Prostate gland (tissue), 2 donors: ENCODE measurements at regions of chr11 and their contacts with region 1.

Region 1: GRCh38 chr11:114250993-114251814 is 45.0 kb upstream of the NNMT start:
- DNase-seq: no peak
- H3K4me3 ChIP-seq: no peak overlapping the region
- H3K27ac ChIP-seq: peak overlapping the region; percentile 26 to 29
- H3K4me1 ChIP-seq: peaks cover 2% of the 10 kb centered on the region
- H3K27me3 ChIP-seq: no peaks in the 10 kb centered on the region
- CTCF ChIP-seq: no peak
- POLR2A ChIP-seq: no peak

Region 2: GRCh38 chr11:114208377-114208776 is 42.8 kb before region 1 on chr11:
- intact Hi-C with region 1: loop called (anchors 5 kb)
- DNase-seq: no peak
- H3K4me3 ChIP-seq: no peak overlapping the region
- H3K27ac ChIP-seq: no peak overlapping the region
- H3K4me1 ChIP-seq: peaks cover 14% of the 10 kb centered on the region
- H3K27me3 ChIP-seq: no peaks in the 10 kb centered on the region
- CTCF ChIP-seq: no peak
- POLR2A ChIP-seq: no peak

Region 3: GRCh38 chr11:114291842-114292680 is 40.9 kb after region 1 on chr11:
- intact Hi-C with region 1: no loop called
- DNase-seq: no peak
- H3K4me3 ChIP-seq: no peak overlapping the region
- H3K27ac ChIP-seq: peak overlapping the region; percentile 37 to 77
- H3K4me1 ChIP-seq: peaks cover 13% of the 10 kb centered on the region
- H3K27me3 ChIP-seq: no peaks in the 10 kb centered on the region
- CTCF ChIP-seq: no peak
- POLR2A ChIP-seq: no peak

Region 4: DNA sequence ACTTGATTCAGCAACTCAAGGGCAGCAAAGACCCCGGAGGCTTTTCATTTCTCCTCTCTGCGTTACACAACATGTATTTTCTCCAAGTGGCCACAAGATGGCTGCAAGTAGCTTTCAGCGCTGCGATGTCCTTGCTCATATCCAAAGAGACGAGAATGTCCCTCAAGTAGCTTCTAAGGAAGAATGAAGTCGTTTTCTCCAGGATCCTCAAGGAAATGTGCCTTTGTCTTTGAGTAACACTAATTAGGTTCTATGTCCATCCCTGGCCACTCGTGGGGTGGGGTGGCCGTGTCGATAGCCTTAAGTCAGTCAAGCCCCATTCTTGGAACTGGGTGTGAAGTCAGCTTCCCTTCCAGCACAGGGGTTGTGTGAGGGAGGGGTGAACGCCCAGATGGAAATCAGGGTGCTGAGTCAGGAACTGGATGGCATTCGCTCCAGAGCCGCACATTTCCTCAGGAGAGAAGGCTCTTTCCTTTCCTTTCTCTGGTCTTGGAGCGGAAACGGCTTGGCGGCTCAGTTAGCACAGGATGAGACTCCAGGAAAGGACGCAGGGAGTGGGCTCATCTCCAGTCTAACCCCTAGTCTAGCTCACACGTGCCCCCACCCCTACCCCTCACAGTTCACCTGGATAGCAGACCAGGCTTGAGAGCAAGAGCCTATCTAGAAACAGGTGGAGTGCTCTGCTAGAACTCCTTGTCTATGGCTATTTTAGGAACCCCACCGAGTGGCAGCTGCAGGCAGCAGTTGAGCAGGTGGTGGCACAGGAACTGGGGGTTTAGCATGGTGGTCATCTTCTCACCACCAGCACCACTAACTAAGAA is 89.3 kb after region 1 on chr11:
- intact Hi-C with region 1: no loop called
- DNase-seq: peak; percentile 53
- H3K4me3 ChIP-seq: no peak overlapping the region
- H3K27ac ChIP-seq: no peak overlapping the region
- H3K4me1 ChIP-seq: no peaks in the 10 kb centered on the region
- H3K27me3 ChIP-seq: no peaks in the 10 kb centered on the region
- CTCF ChIP-seq: peak; percentile 55 to 85 (median 68)
- POLR2A ChIP-seq: no peak

Region 5: DNA sequence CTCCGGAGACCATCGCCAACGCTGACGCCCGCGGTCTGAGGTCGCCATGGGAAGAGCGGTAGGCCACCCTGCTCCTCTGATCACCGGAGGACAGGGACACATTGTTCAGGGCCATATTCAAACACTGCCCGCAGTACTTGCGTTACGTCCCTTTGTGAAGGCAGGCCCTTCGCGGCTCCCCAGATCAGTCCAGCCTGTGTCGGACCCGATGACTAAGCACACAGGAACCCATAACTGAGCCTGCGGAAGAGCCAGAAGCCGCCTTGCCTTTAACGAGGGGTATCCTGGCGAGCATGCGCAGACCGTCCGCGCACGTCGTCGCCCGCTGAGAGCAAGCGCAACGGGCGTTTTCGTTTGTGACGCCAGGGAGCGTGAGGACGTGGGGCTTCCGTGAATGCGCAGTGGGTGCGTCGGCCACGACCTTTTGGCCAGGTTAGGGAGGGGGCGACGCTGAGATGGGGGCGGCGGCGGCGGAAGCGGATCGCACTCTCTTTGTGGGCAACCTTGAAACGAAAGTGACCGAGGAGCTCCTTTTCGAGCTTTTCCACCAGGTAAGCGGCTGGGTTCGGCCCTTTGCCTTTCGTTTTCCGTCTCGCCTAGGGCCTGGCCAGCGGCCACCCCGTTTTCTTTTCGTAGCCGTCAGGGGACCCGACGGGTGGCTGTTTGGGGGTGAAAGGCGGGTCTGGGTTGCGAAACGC is 149.2 kb after region 1 on chr11 and contains the starts of genes C11orf71 and RBM7:
- intact Hi-C with region 1: no loop called
- DNase-seq: peak; percentile 96
- H3K4me3 ChIP-seq: peak within 1 kb of the TSS; percentile 55 to 84
- H3K27ac ChIP-seq: peak within 1 kb of the TSS; percentile 92 to 93
- H3K4me1 ChIP-seq: no peaks in the 10 kb centered on the region
- H3K27me3 ChIP-seq: no peaks in the 10 kb centered on the region
- CTCF ChIP-seq: peak in 1 of 4 experiments; percentile 21
- POLR2A ChIP-seq: peak; percentile 94
- total RNA-seq, gene C11orf71: 14.4 to 15.3 TPM
- total RNA-seq, gene RBM7: 23.7 to 27.3 TPM

Region 6: DNA sequence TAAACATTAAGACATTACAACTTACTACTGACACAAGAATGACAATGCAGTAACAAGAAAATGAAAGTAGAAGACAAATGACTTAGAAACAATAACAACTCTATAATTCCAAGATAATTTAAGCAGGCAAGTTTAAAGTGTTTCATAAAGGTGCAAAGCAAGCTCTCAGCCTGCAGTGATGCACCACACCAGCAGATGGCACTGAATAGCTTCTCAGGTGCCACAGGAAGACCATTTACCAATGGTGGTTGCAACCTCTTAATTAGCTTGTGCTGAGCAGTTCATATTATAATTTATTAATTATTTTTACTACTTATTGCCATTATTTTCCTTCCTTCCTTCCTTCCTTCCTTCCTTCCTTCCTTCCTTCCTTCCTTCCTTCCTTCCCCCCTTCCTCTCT is 487.8 kb after region 1 on chr11:
- intact Hi-C with region 1: no loop called
- DNase-seq: peak; percentile 31
- H3K4me3 ChIP-seq: no peak overlapping the region
- H3K27ac ChIP-seq: no peak overlapping the region
- H3K4me1 ChIP-seq: no peaks in the 10 kb centered on the region
- H3K27me3 ChIP-seq: no peaks in the 10 kb centered on the region
- CTCF ChIP-seq: peak in 3 of 4 experiments; percentile 52 to 67 (median 59)
- POLR2A ChIP-seq: no peak